ENCODE measurements at regions of chr1 and their contacts with region 1.

Region 1: DNA sequence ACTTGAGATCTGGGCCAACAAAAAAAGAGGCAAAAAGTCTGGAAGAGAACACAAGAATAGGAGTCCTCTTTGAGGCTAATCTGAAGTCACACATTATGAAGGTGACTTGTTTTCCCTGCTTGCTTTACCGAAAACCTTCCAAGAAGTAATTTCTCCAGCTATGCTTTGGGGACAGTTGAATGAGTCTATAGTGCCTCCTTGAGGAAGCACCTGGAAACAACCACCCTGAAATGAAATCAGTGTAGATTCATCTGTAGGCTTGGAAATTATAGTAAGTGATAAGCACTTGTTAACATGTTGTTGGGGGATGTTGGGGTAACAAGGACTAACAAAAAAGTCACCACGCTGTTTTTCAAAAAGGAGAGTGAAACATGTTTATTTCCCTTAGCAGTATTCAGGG is 23.4 kb upstream of the RPTN start:
- DNase-seq: peak; percentile 59
- H3K4me3 ChIP-seq: no peak overlapping the region
- H3K27ac ChIP-seq: peak overlapping the region; percentile 84
- H3K4me1 ChIP-seq: peaks cover 33% of the 10 kb centered on the region
- H3K27me3 ChIP-seq: no peaks in the 10 kb centered on the region

Region 2: DNA sequence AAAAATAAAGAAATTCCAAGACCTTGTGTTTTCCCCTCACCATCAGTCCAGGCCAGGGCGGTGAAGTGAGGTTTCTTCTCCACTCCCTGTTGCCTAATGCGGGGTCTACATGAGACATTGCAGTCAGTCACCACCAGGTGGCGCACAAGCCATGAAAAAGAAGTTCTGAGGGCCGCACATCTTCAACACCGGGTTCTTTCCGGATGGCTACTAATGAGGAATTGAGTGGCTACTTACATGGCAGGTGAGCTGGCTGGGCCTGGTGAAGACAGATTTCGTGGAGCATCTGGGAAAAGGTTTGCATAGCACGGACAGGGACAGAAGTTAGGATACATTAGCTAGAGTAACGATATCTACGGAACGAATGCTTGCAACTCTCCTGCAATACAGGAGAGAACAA is 129.8 kb before region 1 on chr1:
- in situ Hi-C with region 1: loop called (anchors 5 kb)
- DNase-seq: peak; percentile 84
- H3K4me3 ChIP-seq: no peak overlapping the region
- H3K27ac ChIP-seq: no peak overlapping the region
- H3K4me1 ChIP-seq: peaks cover 38% of the 10 kb centered on the region
- H3K27me3 ChIP-seq: peaks cover 39% of the 10 kb centered on the region

Region 3: DNA sequence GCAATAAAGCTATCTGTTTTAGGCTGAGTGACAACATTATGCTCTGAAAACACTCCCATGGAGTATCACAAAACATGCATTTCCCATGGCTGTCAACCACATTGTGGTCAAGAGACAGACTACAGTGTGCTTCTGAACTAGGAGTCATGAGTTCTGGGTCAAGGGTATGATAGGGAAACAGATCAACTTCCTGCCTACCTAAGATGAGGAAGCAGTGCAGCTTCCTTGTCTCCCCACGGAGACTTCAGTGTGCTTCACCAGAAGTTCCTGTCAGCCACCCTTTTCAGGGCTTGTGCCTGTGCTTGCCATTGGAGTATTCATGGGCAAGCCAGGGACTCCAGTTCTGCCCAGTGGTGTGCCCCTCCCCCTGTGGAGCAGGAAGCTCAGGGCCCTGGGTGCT is 364.3 kb after region 1 on chr1:
- in situ Hi-C with region 1: no loop called
- DNase-seq: no peak
- H3K4me3 ChIP-seq: no peak overlapping the region
- H3K27ac ChIP-seq: no peak overlapping the region
- H3K4me1 ChIP-seq: no peaks in the 10 kb centered on the region
- H3K27me3 ChIP-seq: 0 out of 2 replicates have a peak, but pooled peaks cover 5% of the 10 kb centered on the region

Measured in GM23248 (cell line).